ENCODE measurements at regions of chr20 and their contacts with region 1.

Region 1: GRCh38 chr20:44683263-44684046 is 31.7 kb upstream of the CCN5 start:
- DNase-seq: no peak
- H3K4me3 ChIP-seq: no peak overlapping the region
- H3K27ac ChIP-seq: no peak overlapping the region
- H3K4me1 ChIP-seq: peaks cover 2% of the 10 kb centered on the region
- H3K27me3 ChIP-seq: no peaks in the 10 kb centered on the region
- CTCF ChIP-seq: peak in 1 of 3 donors; percentile 44
- EP300 ChIP-seq: no peak
- POLR2A ChIP-seq: no peak

Region 2: DNA sequence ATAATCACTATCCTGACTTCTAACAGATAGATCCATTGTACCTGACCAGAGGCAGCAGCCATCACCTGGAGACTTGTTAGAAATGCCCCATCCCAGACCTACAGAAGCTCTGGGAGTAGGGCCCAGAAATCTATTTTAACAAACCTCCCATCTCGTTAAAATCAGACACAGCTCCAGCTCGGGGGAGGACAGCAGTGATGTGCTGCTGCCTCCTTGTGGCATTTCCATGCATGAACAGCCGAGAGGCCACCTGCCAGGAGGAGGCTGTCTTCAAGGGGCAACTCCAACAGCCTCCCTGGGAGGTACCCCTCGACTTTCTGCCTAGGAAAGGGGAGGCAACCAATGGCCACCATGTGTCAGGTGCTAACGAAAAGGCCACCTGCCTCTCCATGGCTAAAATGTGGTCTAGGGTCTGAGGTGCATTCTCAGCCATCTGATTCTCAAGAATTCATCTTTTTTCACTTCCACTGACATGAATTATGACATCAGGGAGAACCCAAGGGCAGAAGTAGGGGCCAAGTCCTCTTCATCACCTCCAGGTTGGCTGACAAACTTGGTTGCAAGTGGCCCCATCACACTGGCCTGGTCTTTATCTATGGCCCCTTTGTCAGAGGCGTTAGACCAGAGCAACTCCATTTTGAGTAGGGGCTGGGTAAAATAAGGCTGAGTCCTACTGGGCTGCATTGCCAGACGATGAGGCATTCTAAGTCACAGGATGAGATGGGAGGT is 50.0 kb after region 1 on chr20:
- intact Hi-C with region 1: loop called (anchors 1 to 2 kb)
- DNase-seq: peak; percentile 76 to 85 (median 83)
- H3K4me3 ChIP-seq: no peak overlapping the region
- H3K27ac ChIP-seq: no peak overlapping the region
- H3K4me1 ChIP-seq: peaks cover 13% of the 10 kb centered on the region
- H3K27me3 ChIP-seq: no peaks in the 10 kb centered on the region
- CTCF ChIP-seq: peak; percentile 89 to 98 (median 91)
- EP300 ChIP-seq: no peak
- POLR2A ChIP-seq: no peak

Region 3: DNA sequence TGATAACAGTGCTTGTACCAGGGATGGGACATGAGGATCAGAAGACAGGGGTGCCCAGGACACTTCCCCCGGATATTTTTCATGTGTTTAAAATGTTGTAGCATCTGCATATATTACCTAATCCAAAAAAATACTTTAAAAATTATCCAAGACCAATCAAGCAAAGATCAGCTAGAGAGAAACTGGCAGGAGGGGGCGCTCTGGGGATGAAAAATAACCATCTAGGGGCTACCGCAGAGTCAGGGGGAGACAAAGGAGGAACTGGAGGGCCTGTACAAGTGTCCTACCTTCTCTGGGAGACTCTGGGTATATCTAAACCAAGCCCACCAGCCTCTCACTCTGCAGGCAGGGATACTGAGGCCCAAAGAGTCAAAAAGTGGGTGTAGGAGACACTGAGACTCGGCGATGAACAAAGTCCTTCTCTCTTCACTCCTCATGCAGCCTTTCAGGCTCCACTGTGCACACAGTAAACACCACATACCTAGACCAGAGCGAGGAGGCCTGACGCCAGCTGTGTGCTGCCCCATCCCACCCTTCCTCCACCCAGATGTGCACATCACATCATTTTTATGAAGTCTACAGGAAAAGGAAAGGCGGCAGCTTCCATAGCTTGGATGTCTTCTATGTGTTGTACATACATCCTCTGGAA is 117.1 kb after region 1 on chr20:
- intact Hi-C with region 1: no loop called
- DNase-seq: no peak
- H3K4me3 ChIP-seq: no peak overlapping the region
- H3K27ac ChIP-seq: no peak overlapping the region
- H3K4me1 ChIP-seq: peaks cover 2% of the 10 kb centered on the region
- H3K27me3 ChIP-seq: no peaks in the 10 kb centered on the region
- CTCF ChIP-seq: no peak
- EP300 ChIP-seq: no peak
- POLR2A ChIP-seq: no peak

Region 4: DNA sequence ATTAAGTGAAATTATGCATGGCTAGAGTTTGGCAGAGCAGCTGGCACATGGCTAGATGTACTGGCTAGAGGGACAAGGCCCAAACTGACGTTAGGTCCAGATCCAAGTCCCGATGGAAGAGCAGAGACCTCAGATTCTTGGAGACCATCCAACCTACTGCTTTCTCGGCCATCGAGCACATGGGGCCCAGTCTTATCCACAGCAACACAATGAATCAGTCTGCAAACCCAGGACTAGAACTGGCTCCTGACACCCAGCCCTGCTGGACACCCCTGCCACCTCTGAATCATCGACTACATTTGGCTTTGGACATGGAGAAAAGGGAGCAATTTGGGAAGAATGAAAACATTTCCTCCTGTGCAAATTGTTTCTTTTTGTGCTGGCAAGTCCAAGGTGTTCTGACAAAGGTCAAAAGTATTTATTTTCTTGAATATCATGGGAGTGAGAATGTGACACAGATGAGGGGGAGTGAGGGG is 178.1 kb after region 1 on chr20:
- intact Hi-C with region 1: loop called in 3 of 4 experiments (anchors 5 to 10 kb)
- DNase-seq: peak in 3 of 5 donors; percentile 37 to 49 (median 48)
- H3K4me3 ChIP-seq: no peak overlapping the region
- H3K27ac ChIP-seq: peak overlapping the region in 1 of 2 donors; percentile 17
- H3K4me1 ChIP-seq: peaks cover 4% of the 10 kb centered on the region
- H3K27me3 ChIP-seq: no peaks in the 10 kb centered on the region
- CTCF ChIP-seq: no peak
- EP300 ChIP-seq: no peak
- POLR2A ChIP-seq: no peak

Region 5: GRCh38 chr20:44866703-44867335 is 183.4 kb after region 1 on chr20:
- intact Hi-C with region 1: loop called in 3 of 4 experiments (anchors 5 to 10 kb)
- DNase-seq: no peak
- H3K4me3 ChIP-seq: no peak overlapping the region
- H3K27ac ChIP-seq: no peak overlapping the region
- H3K4me1 ChIP-seq: peaks cover 4% of the 10 kb centered on the region
- H3K27me3 ChIP-seq: no peaks in the 10 kb centered on the region
- CTCF ChIP-seq: no peak
- EP300 ChIP-seq: no peak
- POLR2A ChIP-seq: no peak

Region 6: DNA sequence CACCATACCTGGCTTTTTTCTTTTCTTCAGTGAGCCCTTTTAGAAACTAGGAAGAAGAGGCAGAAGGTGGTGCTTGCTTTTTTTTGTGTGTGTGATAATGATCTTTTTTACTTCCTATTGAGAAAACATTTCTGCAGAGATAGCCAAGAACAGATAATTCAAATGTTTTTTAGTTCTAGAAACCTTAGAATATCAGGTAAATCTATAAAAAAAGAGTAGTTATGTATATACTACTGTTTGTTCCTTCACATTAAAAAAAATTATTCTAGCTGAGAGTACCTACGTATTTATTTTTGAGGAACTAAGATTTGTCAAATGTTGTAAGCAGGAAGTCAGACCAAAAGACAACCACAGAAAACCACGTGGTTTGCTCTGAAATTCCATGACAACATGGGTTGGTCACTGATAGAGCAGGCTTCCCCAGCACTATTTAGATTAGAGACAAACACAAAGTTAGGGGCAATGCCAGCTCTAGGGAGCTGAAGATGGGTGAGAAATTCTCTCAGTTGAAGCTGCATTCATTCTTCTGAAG is 295.7 kb after region 1 on chr20:
- intact Hi-C with region 1: loop called in 1 of 4 experiments (anchors 5 kb)
- DNase-seq: no peak
- H3K4me3 ChIP-seq: no peak overlapping the region
- H3K27ac ChIP-seq: no peak overlapping the region
- H3K4me1 ChIP-seq: no peaks in the 10 kb centered on the region
- H3K27me3 ChIP-seq: no peaks in the 10 kb centered on the region
- CTCF ChIP-seq: no peak
- EP300 ChIP-seq: no peak
- POLR2A ChIP-seq: no peak

Measured in ovary (tissue), 10 donors.